Common myeloid progenitor, CD34-positive (primary cell): ENCODE measurements at regions of chr15 and their contacts with region 1.

Region 1: DNA sequence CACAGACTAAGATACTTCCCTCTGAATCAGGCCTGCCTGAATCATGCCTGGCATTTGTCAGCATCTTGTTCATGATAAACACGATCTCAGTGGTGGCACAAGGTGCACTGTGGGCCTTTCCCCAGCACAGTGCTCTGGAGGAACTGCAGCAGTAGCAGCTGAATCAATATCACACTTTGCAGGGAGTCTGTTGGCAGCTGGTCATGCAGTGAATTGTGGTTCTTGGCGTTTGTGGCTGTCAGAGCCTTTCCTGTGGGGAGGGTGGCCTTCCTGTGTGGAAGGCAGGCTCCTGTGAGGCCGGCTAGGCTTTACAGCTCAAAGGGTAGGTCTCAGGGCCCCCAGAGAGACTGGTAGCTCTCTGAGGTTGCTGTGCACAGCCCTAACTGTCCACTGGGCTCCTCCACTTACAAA is 54.4 kb upstream of the TLE3 start:
- DNase-seq: peak; percentile 55 to 95 (median 91)
- H3K4me3 ChIP-seq: peak overlapping the region in 1 of 7 experiments; percentile 2
- H3K27ac ChIP-seq: no peak overlapping the region
- H3K4me1 ChIP-seq: peaks cover 19 to 78% (median 67%) of the 10 kb centered on the region in 4 experiments
- H3K27me3 ChIP-seq: no peaks in the 10 kb centered on the region

Region 2: DNA sequence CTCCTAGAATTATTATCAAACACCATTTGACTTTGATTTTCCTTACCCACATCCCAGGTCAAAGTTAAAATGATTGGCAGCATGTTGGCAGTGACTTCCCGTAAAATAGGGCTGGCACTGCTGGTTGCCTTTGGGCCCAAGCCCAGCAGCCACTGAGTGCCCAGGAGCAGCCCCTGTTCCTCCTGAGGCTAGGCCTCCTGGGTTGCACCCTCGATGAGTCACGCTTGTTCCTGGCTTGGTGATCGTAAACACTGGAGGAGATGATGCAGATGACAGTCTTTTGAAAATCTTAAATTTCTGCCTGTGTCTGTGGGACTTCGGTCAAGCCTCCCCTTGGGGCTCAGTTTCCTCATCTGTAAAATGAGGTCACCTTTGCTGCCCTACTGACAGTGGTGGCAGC is 344.3 kb before region 1 on chr15:
- CTCF ChIA-PET with region 1: no interaction called
- POLR2A ChIA-PET with region 1: no interaction called
- DNase-seq: peak in 2 of 3 donors; percentile 24 to 33
- H3K4me3 ChIP-seq: no peak overlapping the region
- H3K27ac ChIP-seq: no peak overlapping the region
- H3K4me1 ChIP-seq: peaks cover 15 to 43% (median 32%) of the 10 kb centered on the region in 4 experiments
- H3K27me3 ChIP-seq: no peaks in the 10 kb centered on the region

Region 3: DNA sequence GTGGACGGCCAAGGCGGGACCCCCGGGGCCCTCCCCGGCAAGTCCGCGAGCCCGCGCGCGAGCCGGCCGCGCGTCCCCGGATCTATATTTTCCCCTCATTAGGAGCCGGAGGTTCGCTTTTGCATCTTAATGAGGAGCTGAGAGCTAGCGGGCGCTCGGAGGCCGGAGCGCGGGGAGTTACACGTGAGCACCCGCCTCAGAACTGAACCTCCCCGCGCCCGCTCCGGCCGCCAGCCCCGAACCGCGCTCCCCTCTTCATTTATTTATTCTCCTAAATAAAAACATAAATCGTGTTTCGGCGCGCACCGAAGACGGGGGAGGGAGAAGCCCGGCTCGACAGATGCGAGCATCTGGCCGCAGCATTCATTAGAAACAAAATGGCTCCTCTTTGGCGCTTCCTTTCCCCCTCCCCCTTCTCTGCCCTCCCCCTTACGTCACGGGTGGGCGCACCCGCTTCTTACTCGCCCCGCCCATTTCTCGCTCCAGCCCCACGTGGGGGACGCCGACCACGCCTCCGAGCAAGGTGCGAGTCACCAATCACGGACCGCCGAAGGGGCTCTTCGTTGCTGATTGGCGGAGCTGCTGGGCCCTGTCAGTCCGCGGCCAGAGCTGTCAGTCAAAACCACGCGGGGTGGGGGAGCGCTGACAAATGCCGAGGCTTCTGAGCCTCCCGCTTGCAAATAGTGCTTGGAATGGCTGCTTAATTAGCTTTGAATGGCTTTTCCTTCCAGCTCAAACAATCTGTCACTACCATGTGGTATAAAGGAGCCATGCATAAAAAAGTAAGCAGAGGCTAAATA is 52.7 kb before region 1 on chr15:
- CTCF ChIA-PET with region 1: interaction called, 16 read pairs
- POLR2A ChIA-PET with region 1: interaction called, 3 read pairs
- DNase-seq: peak; percentile 98 to 99 (median 99)
- H3K4me3 ChIP-seq: peak overlapping the region; percentile 50 to 93 (median 70)
- H3K27ac ChIP-seq: peak overlapping the region; percentile 54 to 87
- H3K4me1 ChIP-seq: peaks cover 14 to 77% (median 69%) of the 10 kb centered on the region in 4 experiments
- H3K27me3 ChIP-seq: no peaks in the 10 kb centered on the region

Region 4: GRCh38 chr15:70140543-70141375 is 11.3 kb before region 1 on chr15:
- CTCF ChIA-PET with region 1: interaction called, 14 read pairs
- POLR2A ChIA-PET with region 1: interaction called, 6 read pairs
- DNase-seq: peak; percentile 70 to 94 (median 92)
- H3K4me3 ChIP-seq: peak overlapping the region in 4 of 7 experiments; percentile 14 to 46 (median 24)
- H3K27ac ChIP-seq: no peak overlapping the region
- H3K4me1 ChIP-seq: peaks cover 8 to 54% (median 48%) of the 10 kb centered on the region in 4 experiments
- H3K27me3 ChIP-seq: no peaks in the 10 kb centered on the region

Region 5: GRCh38 chr15:70182857-70183695 is 31.0 kb after region 1 on chr15:
- CTCF ChIA-PET with region 1: interaction called, 11 read pairs
- POLR2A ChIA-PET with region 1: no interaction called
- DNase-seq: no peak
- H3K4me3 ChIP-seq: no peak overlapping the region
- H3K27ac ChIP-seq: no peak overlapping the region
- H3K4me1 ChIP-seq: peaks cover 0 to 17% (median 2%) of the 10 kb centered on the region in 4 experiments
- H3K27me3 ChIP-seq: no peaks in the 10 kb centered on the region